MCF 10A (cell line): ENCODE measurements at regions of chr3 and their contacts with region 1.

Region 1: GRCh38 chr3:128051837-128052594 is at the start of gene SEC61A1:
- DNase-seq: peak; percentile 93
- H3K4me3 Mint-ChIP-seq: peak within 1 kb of the TSS; percentile 100
- H3K27ac Mint-ChIP-seq: peak within 1 kb of the TSS; percentile 92
- H3K4me1 Mint-ChIP-seq: peaks cover 37% of the 10 kb centered on the region
- H3K27me3 Mint-ChIP-seq: no peaks in the 10 kb centered on the region
- CTCF ChIP-seq: no peak
- total RNA-seq, gene SEC61A1: 418 and 519 TPM in 2 replicates

Region 2: DNA sequence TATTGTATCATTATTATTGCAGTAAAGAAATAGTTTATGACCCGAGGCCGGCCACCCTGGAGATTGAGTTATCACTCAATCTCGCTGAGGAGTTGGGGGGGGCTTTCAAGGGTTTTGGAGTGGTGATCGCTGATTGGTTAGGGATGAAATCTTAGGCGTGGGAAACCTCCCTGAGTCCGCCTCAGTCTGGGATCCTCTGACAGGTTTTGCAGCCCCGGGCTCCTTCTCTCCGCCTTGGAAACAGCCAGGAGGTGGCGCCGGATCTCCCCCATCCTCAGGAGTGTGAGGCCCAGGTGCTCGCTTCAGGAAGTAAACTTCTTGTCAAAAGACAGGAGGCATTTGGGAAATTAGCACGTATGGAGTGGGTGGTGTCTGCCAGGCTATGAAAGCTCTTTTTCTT is 40.9 kb before region 1 on chr3:
- CTCF ChIA-PET with region 1: interaction called, 3 read pairs
- POLR2A ChIA-PET with region 1: interaction called, 17 read pairs
- intact Hi-C with region 1: loop called (anchors 1 kb)
- DNase-seq: peak; percentile 61
- H3K4me3 Mint-ChIP-seq: peak overlapping the region; percentile 52
- H3K27ac Mint-ChIP-seq: no peak overlapping the region
- H3K4me1 Mint-ChIP-seq: peaks cover 23% of the 10 kb centered on the region
- H3K27me3 Mint-ChIP-seq: no peaks in the 10 kb centered on the region
- CTCF ChIP-seq: peak; percentile 50

Region 3: DNA sequence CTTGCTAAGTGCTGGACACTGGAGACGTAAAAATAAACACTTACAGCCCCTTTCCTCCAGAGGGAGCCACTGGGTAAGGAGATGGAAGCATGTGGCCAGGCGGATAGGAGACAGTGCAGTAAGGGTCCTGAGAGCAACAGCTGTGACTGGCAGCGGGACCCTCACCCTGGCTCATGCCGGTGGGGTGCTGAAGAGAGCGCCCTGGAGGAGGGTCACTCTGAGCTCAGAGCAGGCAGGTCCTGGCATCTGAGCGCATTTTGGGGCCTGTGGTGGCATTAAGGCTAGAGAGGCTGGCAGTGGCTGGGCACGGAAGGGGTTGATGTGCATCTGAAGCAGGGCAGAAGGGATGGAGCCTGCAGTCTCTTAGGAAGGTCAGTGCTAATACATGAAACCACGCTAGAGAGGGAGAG is 16.2 kb after region 1 on chr3:
- CTCF ChIA-PET with region 1: interaction called, 21 read pairs
- POLR2A ChIA-PET with region 1: interaction called, 8 read pairs
- intact Hi-C with region 1: no loop called
- DNase-seq: peak; percentile 62
- H3K4me3 Mint-ChIP-seq: no peak overlapping the region
- H3K27ac Mint-ChIP-seq: peak overlapping the region; percentile 46
- H3K4me1 Mint-ChIP-seq: peaks cover 11% of the 10 kb centered on the region
- H3K27me3 Mint-ChIP-seq: no peaks in the 10 kb centered on the region
- CTCF ChIP-seq: peak; percentile 61

Region 4: DNA sequence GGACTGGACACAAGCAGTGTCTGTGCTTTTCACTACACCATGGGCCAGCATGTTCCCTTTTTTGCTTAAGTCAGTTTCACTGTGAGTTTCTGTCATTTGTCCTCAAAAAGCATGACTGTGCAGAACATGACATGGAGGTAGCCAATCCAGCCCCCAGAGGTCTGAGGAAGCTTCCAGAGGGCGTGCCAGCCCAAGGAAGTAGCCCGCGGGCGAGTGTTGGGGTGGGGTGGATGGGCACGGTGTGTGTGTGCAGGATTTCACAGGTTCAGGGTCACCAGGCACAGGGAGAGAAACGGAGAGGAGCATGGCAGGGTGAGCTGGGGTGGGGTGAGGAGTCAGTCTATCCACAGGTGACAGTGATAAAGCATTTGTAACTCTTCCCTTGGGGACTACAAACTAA is 93.3 kb after region 1 on chr3:
- CTCF ChIA-PET with region 1: no interaction called
- POLR2A ChIA-PET with region 1: no interaction called
- intact Hi-C with region 1: no loop called
- DNase-seq: no peak
- H3K4me3 Mint-ChIP-seq: no peak overlapping the region
- H3K27ac Mint-ChIP-seq: no peak overlapping the region
- H3K4me1 Mint-ChIP-seq: no peaks in the 10 kb centered on the region
- H3K27me3 Mint-ChIP-seq: no peaks in the 10 kb centered on the region
- CTCF ChIP-seq: no peak